ENCODE measurements at regions of chr17 and their contacts with region 1.

Region 1: DNA sequence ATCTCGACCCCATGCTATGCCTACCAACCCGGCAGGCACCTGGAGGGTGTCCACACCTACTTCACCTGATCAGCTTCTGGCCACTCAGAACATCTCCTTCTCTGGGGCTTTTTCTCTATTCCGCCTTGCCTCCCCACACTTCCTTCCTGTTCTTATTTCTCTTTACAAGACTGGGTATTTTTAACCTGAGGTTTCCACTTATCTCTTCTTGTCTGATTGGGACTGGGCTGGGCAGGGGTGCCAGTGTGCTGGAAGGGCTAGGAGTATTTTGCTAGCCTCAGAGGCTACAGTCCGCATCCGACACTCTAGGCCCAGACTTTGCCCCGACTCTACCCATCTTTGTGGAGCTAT is 26.2 kb upstream of the ZNF652 start:
- DNase-seq: no peak
- ATAC-seq: no peak

Region 2: GRCh38 chr17:49201481-49201927 is 186.8 kb before region 1 on chr17:
- intact Hi-C with region 1: loop called (anchors 10 kb)
- DNase-seq: no peak
- ATAC-seq: no peak